GM10248 (cell line): ENCODE measurements at regions of chr3 and their contacts with region 1.

Region 1: DNA sequence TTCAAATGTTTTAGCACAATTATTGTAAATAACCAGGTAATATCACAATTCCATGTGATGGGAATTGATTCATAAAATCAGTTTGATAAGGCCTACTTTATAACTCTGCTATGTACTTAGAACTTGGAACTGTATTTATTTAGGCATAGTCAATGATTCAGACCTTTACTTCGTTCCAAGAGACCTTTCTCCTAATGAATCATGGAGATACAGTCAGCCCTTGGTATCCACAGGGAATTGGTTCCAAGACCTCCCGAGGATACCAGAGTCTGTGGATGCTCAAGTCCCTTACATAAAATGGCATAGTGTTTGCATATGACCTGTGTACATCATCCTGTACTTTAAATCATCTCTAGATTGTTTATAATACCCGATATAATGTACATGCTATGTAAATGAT is 60.8 kb upstream of the UMPS start:
- DNase-seq: no peak
- CTCF ChIP-seq: no peak

Region 2: GRCh38 chr3:124951511-124952281 is 282.2 kb after region 1 on chr3:
- CTCF ChIA-PET with region 1: no interaction called
- POLR2A ChIA-PET with region 1: no interaction called
- DNase-seq: no peak
- CTCF ChIP-seq: no peak

Region 3: DNA sequence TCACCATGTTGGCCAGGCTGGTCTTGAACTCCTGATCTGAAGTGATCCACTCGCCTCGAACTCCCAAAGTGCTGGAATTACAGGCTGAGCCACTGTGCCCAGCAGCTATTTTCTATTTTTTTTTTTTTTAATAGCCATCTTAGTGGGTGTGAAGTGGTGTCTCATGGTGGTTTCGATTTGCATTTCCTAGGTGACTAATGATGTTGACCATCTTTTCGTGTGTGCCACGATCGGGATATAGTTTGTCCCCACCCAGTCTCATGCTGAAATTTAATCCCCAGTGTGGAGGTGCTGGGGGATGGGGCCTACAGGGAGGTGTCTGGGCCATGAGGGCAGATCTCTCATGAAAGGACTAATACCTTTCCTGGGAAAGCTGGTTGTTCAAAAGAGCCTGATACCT is 306.9 kb after region 1 on chr3:
- CTCF ChIA-PET with region 1: no interaction called
- POLR2A ChIA-PET with region 1: interaction called, 10 read pairs
- DNase-seq: no peak
- CTCF ChIP-seq: no peak